Ovary (tissue), 10 donors: ENCODE measurements at regions of chr15 and their contacts with region 1.

Region 1: GRCh38 chr15:34239151-34239808 is 14.5 kb downstream of the EMC4 start:
- DNase-seq: no peak
- H3K4me3 ChIP-seq: no peak overlapping the region
- H3K27ac ChIP-seq: no peak overlapping the region
- H3K4me1 ChIP-seq: no peaks in the 10 kb centered on the region
- H3K27me3 ChIP-seq: no peaks in the 10 kb centered on the region
- CTCF ChIP-seq: no peak
- EP300 ChIP-seq: no peak
- POLR2A ChIP-seq: no peak

Region 2: DNA sequence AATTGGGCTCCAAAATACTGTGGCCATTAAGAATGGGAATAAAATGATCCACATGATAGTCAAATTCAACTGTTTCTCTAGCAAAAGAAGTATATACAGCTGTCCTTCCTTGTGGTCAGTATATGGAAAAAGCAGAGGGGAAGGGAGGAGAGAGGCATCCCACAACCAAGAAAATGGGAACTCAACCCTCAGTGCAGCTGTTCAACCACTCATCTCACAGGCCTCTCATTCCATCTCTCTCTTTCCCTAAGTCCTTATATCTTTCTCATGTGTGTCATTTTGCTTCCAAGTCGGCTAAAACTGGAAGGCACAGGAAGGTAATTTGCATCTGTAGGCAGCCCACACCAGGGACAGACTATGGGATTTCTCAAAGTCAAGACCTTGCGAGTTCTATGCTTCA is 227.8 kb before region 1 on chr15:
- intact Hi-C with region 1: no loop called
- DNase-seq: no peak
- H3K4me3 ChIP-seq: no peak overlapping the region
- H3K27ac ChIP-seq: no peak overlapping the region
- H3K4me1 ChIP-seq: no peaks in the 10 kb centered on the region
- H3K27me3 ChIP-seq: no peaks in the 10 kb centered on the region
- CTCF ChIP-seq: no peak
- EP300 ChIP-seq: no peak
- POLR2A ChIP-seq: no peak

Region 3: DNA sequence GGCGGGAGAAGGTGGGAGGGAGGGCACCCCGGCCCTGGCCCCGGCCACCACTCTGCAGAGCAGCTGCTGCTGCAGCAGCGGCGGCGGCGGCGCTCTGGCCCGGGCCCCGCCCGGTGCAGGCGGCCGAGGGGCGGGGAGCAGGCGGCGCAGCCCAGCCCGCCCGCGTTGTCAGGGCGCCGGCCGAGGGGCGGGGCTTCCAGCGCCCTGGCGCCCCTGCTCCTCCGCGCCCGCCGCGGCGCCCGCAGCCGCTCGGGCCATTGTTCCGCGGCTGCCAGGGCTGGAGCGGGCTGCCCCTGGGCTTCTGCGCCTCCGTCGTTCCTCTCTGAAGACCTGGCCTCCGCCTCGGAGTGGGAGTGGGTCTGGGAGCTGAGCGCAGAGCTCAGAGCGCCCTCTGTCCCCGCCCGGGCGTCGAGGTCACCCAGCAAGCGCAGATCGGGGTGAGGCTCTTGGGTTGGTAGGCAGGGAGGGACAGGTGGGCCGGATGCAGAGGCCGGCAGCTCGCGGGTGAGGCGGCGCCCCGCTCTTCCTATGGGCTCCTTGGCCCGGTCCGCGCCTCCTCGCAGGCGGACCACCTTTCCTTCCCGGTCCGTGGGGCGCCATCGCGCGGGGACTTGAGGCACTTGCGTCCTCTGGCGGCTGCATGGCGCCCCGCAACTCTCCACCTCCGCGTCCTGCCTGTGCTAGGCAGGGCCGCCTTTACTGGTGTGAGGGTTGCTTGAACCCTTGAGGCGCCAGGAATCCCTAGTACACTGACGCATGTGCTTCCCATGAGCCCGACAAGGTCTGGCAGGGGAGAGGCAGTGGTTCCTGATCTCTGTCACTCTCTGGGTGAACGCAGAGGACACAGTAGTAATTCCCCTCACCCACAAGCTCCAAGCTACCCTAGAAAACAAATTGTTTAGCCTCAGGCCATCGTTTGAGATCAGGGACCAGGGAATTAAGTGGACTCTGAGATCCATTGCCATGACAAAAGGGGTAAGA is 128.1 kb after region 1 on chr15 and contains the start of gene LPCAT4:
- intact Hi-C with region 1: loop called in 1 of 4 experiments (anchors 10 kb)
- DNase-seq: peak; percentile 83 to 90 (median 86)
- H3K4me3 ChIP-seq: peak within 1 kb of the TSS; percentile 80
- H3K27ac ChIP-seq: peak within 1 kb of the TSS; percentile 90 to 99
- H3K4me1 ChIP-seq: no peaks in the 10 kb centered on the region
- H3K27me3 ChIP-seq: no peaks in the 10 kb centered on the region
- CTCF ChIP-seq: peak; percentile 91 to 97 (median 96)
- EP300 ChIP-seq: no peak
- POLR2A ChIP-seq: peak; percentile 50
- total RNA-seq, gene LPCAT4: 8.9 to 44.3 (median 34.4) TPM